Activated naive CD4-positive, alpha-beta T cell treated with anti-CD3 and anti-CD28 coated beads for 36 hours (primary cell): ENCODE measurements at regions of chr10 and their contacts with region 1.

Region 1: GRCh38 chr10:124539935-124540641 is 78.5 kb downstream of the LHPP start:
- DNase-seq: peak; percentile 71
- H3K4me3 Mint-ChIP-seq: no peak overlapping the region
- H3K27ac Mint-ChIP-seq: no peak overlapping the region
- H3K4me1 Mint-ChIP-seq: peaks cover 11% of the 10 kb centered on the region
- H3K27me3 Mint-ChIP-seq: no peaks in the 10 kb centered on the region

Region 2: DNA sequence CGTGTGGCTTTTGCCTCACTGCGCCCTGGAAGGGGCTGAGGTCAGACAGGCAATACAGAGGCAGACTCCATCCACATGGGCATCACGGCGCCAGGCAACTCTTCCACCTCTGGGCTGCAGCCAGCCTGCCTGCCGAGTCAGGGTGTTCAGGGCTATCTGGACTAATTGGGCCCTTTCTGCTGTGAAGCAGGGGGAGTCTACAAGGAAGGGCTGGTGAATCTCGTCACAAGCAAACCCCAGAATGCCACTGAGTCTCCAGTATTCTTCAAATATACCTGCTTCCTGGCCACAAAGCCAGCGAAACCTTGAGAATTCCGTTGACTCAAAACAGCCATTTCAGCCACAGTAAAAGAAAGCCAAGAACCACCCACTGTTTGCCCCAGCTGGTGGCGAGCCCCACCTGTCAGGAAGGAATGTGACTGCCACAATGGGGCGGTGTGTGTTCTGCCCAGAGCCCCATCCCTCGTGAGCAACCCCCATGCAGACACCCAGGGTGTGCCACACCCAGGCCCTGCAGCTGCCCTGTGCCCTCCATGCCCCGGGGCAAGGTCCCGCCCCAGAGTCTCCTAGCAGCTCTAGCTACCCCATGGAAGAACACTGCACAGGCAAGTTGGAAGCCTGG is 86.8 kb after region 1 on chr10:
- CTCF ChIA-PET with region 1: no interaction called
- intact Hi-C with region 1: loop called (anchors 5 kb)
- DNase-seq: peak; percentile 66
- H3K4me3 Mint-ChIP-seq: no peak overlapping the region
- H3K27ac Mint-ChIP-seq: no peak overlapping the region
- H3K4me1 Mint-ChIP-seq: peaks cover 26% of the 10 kb centered on the region
- H3K27me3 Mint-ChIP-seq: no peaks in the 10 kb centered on the region

Region 3: DNA sequence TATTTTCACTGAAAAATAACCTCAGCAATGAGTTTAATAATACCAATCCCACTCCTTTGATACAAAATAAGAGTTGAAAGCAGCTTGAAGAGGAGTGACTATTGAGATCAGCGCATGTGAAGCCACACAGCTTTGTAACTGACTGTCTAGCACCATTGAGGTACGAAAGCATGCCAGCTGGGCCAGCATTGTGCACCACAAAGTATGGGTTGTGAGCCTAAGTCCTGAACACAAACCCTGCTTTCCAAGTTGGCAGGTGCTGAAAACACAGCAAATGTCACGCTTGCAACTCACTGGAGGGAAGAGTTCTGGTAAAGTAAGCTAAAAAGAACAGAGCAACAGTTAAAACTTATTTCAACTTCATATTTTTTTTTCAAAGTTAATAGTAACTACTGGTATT is 208.1 kb after region 1 on chr10:
- CTCF ChIA-PET with region 1: interaction called, 43 read pairs
- intact Hi-C with region 1: no loop called
- DNase-seq: peak; percentile 33
- H3K4me3 Mint-ChIP-seq: no peak overlapping the region
- H3K27ac Mint-ChIP-seq: no peak overlapping the region
- H3K4me1 Mint-ChIP-seq: peaks cover 18% of the 10 kb centered on the region
- H3K27me3 Mint-ChIP-seq: no peaks in the 10 kb centered on the region